RWPE1 (cell line): ENCODE measurements at regions of chr13 and their contacts with region 1.

Region 1: GRCh38 chr13:96172066-96172465 is 82.2 kb downstream of the HS6ST3 start:
- DNase-seq: peak; percentile 38
- H3K27ac ChIP-seq: no peak overlapping the region
- CTCF ChIP-seq: no peak

Region 2: GRCh38 chr13:95906999-95907398 is 265.1 kb before region 1 on chr13:
- CTCF ChIA-PET with region 1: no interaction called
- POLR2A ChIA-PET with region 1: no interaction called
- DNase-seq: no peak
- H3K27ac ChIP-seq: no peak overlapping the region
- CTCF ChIP-seq: no peak

Region 3: DNA sequence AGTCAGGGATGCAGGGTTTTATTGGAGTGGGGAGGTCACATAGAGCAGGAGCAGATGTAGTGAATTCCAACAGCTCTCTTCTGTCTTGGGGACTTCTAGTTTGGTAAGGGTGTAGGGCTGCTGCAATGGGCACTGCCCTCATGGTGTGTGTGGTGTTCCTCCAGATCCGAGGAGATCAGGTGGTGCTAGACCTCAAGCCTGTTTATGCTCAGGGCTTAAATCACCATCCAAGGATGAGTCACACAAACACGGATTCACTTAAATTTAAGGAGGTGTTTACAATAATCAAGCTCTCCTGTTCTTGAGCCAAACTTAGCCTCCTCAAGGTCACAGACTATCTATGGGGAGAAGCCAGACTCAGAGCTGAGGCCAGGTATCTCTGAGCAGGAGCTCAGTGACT is 59.1 kb before region 1 on chr13:
- CTCF ChIA-PET with region 1: no interaction called
- POLR2A ChIA-PET with region 1: no interaction called
- DNase-seq: no peak
- H3K27ac ChIP-seq: no peak overlapping the region
- CTCF ChIP-seq: no peak

Region 4: DNA sequence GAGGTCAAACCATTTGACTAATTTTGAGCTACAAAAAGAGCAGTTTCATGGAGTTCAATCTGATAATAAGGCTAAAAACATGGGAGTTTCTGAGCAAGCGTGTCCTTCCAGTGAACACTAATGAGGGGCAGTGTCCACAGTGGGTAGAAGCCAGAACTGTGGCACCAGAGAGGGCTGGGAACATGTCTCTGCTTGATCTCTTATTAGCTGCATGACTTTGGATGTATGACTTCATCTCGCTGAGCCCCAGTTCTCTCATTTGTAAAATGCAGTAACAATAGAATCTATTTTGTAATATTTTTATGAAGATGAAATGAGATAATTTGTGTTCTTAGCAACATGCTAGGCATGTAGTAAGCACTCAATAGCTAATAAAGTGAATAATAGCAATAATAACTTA is 12.3 kb before region 1 on chr13:
- CTCF ChIA-PET with region 1: interaction called, 10 read pairs
- POLR2A ChIA-PET with region 1: no interaction called
- DNase-seq: no peak
- H3K27ac ChIP-seq: no peak overlapping the region
- CTCF ChIP-seq: no peak

Region 5: GRCh38 chr13:96214824-96215445 is 42.9 kb after region 1 on chr13:
- CTCF ChIA-PET with region 1: no interaction called
- POLR2A ChIA-PET with region 1: no interaction called
- DNase-seq: no peak
- H3K27ac ChIP-seq: no peak overlapping the region
- CTCF ChIP-seq: no peak

Region 6: GRCh38 chr13:96481482-96481881 is 309.4 kb after region 1 on chr13:
- CTCF ChIA-PET with region 1: no interaction called
- POLR2A ChIA-PET with region 1: no interaction called
- DNase-seq: no peak
- H3K27ac ChIP-seq: no peak overlapping the region
- CTCF ChIP-seq: no peak